Right ventricle myocardium superior (tissue), 1 donor: ENCODE measurements at regions of chr12 and their contacts with region 1.

Region 1: DNA sequence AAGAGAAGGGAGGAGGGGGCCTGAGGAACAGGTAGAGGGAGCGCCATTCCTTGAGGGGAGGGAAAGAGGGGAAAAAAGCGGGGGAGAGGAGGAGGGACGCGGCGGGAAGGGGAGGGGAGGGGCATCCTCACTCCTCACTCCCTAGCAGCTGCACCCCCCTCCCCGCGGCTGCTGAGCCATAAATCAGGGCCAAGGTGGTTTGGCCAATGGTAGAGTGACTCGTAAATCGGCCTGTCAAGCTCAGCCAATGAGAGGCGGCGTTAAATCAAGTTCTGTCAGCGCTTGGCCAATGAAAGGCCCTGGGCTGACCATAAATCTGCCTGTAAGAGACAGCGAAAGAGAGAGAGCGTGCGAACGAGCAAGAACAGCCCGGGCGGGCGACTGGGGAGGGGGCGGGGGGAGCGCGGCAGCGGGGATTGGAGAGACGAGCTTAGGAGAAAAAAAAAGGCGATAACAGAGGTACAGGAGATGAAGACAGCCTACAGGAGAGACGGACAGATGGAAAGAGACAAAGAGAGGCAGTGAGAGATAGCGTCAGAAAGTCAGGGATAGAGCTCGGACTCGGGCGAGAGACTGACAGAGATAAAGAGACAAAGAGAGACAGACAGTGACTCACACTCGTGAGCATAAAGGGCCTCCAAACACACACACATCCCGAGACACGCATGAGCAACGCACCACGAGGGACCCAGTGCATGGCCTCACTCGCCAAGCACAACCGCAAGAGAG is 5.1 kb downstream of the GPR84 start:
- DNase-seq: peak; percentile 97
- ATAC-seq: peak; percentile 97

Region 2: DNA sequence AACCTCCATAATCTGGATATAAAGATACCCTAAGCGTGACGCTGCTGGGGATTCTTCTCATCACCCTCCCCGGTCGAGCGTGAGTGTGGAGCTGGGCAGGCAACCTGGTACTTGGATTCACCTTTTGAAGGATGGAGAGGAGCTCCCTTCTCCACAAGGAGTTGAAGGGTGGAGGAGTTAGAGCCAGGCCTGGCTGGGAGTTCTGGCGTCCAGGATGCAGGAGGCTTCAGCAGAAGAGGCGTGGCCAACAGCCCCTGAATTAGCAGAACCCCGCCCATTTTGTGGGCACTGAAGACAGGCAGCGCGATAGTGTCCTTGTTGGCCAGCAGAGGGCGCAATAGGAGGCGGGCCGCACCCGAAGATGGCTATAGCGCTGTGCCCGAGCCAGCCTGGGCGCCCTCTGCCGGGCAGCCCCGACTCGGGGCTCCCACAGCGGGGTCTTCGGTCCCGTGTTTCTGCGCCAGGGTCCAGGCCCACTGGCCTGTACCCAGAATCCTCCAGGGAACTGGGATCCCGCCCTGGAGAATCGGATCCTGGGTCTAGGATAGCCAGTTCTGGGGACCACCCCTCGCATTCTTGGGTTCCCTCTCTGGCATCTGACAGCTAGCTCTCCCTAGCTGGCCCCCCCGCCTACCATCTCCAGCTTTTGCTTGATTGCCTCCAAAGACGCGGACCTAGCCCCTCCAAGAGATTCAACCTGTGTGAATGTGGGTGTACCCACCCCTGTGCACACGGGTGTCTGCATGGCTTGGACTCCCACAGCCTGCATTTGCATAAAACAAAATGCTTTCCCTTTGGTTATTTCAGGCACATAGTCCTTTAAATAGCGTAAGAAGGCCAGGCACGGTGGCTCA is 144.4 kb before region 1 on chr12:
- intact Hi-C with region 1: loop called (anchors 5 kb)
- DNase-seq: peak; percentile 89
- ATAC-seq: peak; percentile 88

Region 3: DNA sequence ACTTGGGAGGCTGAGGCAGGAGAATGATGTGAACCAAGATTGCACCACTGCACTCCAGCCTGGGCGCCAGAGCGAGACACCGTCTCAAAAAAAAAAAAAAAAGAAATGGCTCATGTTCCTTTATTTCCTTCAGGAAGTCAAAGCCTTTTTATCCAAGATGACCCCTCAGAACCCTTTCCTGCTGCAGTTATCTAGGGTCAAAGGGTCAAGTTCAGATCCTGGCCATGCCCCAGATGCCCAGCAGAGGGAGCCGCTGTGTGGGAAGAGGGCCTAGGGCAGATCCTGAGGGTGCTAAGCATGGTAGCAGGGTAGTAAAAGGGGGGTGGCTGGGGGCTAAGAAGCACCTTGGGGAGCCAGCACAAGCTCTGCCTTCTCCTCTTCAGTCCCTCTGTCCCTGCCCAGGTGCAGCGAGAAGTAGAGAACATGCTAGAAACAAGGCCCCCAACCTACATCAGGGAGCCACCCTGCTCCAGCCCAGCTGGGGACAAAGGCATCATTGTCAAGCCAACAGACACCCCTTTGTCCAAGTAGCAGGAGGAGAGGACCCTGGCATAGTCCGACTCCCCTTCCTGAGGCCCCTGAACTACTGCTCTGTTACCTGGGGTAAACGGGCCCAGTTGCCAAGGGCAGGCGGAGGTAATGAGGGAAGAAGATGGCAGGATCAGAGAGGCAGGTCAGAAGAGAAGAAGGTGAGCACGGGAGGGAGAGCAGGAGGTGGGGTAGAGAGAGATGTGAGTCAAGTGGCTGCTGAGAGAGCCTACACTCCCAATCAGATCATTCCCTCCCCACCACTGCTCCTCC is 64.8 kb before region 1 on chr12:
- intact Hi-C with region 1: loop called (anchors 5 kb)
- DNase-seq: peak; percentile 69
- ATAC-seq: peak; percentile 73